AG04450 (cell line): ENCODE measurements at regions of chr2 and their contacts with region 1.

Region 1: DNA sequence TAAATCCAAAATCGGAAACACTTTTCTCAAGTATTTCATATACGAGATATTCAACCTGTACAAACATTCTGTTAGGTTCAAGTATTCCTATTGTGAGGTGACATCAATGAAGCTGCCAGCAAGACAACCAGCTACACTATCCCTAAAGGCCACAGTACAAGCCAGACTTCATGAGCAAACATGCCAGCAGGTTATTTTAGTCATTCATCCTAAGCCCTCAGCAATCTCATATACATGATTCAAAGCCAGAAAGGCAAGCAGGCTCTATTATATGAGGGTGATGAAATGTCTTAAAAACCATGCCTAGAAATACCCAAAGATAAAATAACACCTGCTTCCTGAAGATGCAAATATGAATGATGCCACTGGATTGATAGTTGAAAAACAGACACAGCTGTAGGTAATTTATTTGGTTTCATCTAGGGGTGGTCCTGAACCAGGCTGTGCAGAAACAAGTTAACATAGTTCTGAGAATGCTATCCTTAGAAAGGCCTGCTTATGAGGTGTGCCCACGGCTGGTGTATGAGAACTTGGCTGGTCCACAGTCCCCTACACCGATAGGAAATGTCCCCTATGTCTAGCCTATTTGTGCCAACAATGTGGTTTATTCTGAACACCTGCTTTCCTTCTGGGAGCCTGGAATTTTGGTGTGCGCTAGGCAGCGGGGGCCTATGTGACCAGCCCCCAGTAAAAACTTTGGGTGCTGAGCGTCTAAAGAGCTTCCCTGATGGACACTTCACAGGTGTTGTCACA is 48.2 kb upstream of the KIDINS220 start:
- DNase-seq: no peak
- H3K4me3 ChIP-seq: no peak overlapping the region
- H3K27ac ChIP-seq: no peak overlapping the region
- H3K27me3 ChIP-seq: no peaks in the 10 kb centered on the region
- CTCF ChIP-seq: no peak

Region 2: DNA sequence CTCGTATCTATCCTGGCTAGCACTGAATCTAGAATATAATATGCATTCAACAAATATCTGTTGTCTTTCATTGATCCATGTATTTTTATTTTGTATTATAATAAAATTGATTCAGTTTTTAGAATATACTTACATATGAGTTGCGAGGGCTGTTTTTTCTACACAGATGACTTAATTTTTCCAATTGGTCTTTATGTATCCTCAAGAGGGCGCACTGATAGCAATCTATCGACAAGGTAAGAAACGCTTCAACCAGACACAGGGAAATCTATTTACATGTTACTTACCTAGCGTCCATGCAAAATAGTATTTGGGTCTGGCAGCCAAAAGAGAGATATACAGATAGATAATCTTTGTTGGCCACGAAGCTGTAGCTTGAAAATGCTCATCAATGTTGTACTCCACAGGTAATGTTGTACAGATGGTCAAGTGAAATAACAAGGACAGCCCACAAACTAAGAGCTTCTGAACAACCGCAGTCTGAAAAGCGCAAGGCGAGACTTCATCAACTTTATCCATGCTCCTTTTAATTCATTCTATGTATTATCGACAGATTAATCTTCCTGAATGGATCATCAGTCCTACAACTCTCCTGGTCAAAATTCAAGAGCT is 12.7 kb before region 1 on chr2:
- CTCF ChIA-PET with region 1: interaction called, 16 read pairs
- POLR2A ChIA-PET with region 1: no interaction called
- DNase-seq: peak; percentile 47
- H3K4me3 ChIP-seq: no peak overlapping the region
- H3K27ac ChIP-seq: no peak overlapping the region
- H3K27me3 ChIP-seq: no peaks in the 10 kb centered on the region
- CTCF ChIP-seq: peak; percentile 74

Region 3: GRCh38 chr2:9308186-9308955 is 422.7 kb after region 1 on chr2:
- CTCF ChIA-PET with region 1: no interaction called
- POLR2A ChIA-PET with region 1: no interaction called
- DNase-seq: no peak
- H3K4me3 ChIP-seq: no peak overlapping the region
- H3K27ac ChIP-seq: no peak overlapping the region
- H3K27me3 ChIP-seq: no peaks in the 10 kb centered on the region
- CTCF ChIP-seq: no peak